Motor neuron (in vitro differentiated cells): ENCODE measurements at regions of chr1 and their contacts with region 1.

Region 1: DNA sequence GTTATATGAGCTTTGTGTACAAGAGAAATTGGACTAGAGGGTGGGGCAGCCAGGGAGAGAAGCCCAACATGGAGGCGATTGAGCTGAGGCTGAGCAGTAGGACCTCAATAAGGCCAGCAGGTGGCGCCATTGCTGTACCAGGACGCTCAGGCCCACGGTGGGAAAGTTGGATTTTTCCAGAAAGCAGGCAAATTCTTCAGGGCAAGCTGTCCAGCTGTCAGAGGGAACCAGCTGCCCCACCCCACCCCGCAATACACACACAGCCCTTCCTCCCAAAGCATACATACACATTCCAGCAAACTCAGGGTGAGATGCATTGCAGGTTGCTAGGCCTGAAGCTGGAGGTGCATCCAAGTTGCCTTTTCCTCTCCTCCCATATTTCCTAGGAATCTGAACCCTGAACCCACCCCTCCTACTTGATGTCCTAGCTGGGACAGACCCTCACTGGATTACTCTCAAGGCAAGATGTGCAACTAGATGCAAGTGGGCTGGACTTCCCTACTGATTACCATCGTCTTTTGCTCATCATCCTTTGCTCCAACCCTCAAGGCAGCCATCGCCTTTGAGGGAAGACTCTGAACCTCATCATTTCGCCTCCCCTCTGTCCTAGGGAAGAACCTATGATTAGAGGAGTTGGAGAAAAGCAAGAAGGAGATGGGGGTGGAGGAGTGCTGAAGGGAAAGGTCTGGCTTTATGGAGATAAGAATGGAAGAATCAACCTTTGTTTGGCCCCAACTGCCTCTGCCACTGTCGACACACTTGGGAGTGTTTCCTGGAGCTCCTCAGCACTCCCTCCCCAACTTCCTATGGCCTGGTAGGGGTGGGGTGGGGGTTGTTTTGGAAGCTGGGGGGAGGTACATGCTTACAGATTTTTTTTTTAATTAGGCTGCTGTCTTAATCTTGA is 25.5 kb downstream of the CD34 start:
- ATAC-seq: peak; percentile 91 to 100 (median 97)
- H3K4me3 ChIP-seq: no peak overlapping the region
- H3K27ac ChIP-seq: no peak overlapping the region
- H3K4me1 ChIP-seq: no peaks in the 10 kb centered on the region

Region 2: DNA sequence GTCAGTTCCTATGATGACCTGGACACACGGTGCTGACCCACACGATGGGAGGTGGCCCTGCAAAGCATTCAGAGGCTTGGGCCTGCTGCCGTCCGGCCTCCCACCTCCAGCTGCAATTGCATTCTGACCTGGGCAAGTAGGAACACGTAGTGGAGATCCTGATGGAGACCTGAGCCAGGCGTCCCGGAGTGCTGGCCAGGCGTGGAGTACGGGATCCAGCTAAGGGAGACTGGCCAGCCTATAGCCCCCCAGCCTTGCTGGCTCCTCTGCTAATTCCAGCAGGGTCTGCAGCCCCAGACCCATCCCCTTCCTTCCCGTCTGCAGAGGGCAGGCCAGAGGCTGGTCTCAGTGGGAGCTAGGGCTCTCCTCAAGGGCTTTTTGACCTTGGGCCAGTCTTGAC is 122.3 kb before region 1 on chr1:
- in situ Hi-C with region 1: no loop called
- ATAC-seq: peak in 5 of 8 experiments; percentile 8 to 42 (median 24)
- H3K4me3 ChIP-seq: no peak overlapping the region
- H3K27ac ChIP-seq: no peak overlapping the region
- H3K4me1 ChIP-seq: peaks cover 0 to under 1% of the 10 kb centered on the region in 2 donors

Region 3: GRCh38 chr1:207963427-207964194 is 78.2 kb after region 1 on chr1:
- in situ Hi-C with region 1: loop called in 1 of 9 experiments (anchors 10 kb)
- ATAC-seq: peak; percentile 60 to 95 (median 90)
- H3K4me3 ChIP-seq: peak overlapping the region; percentile 26 to 39 (median 34)
- H3K27ac ChIP-seq: peak overlapping the region; percentile 46 to 77
- H3K4me1 ChIP-seq: peaks cover 9 to 12% of the 10 kb centered on the region in 2 donors

Region 4: GRCh38 chr1:207973898-207974568 is 88.7 kb after region 1 on chr1:
- in situ Hi-C with region 1: loop called in 3 of 9 experiments (anchors 10 to 25 kb)
- ATAC-seq: peak in 3 of 8 experiments; percentile 34 to 98 (median 95)
- H3K4me3 ChIP-seq: no peak overlapping the region
- H3K27ac ChIP-seq: no peak overlapping the region
- H3K4me1 ChIP-seq: peaks cover 19 to 27% of the 10 kb centered on the region in 2 donors

Region 5: DNA sequence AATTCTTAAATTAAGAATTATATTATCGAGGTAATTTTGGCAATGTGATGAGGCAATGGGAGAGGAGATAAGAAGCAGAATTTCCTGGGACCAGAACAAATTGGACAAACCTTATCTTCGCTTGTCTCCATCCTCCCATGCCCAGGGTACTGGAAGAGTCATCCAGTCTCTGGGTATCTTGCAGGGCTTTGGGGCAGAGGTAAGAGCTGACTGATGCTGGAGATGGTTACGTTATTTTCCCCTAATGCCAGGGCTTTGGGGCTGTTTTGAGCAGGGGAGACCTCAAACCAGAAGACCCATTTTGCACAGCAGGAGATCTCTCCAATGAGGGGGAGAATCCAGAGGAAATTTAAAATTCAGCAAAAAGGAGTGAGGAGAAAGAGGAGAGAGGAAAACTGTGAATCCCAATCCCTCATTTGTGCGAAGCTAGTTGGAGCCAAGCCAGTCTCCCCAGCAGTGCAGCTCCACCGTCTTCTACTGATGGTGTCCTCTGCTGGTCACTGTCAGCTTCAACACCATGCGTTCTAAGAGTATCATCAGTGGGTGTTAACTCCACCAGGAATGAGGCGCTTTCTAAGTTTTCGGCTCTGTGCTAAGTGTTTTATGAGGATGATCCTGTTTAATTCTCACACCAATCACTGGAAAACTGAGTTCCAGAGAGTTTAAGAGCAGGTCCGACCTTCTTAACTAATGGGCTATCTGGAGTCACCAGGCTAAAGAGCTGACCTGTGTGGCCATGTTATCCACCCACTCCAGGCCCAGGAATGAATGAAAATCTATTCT is 112.3 kb after region 1 on chr1:
- in situ Hi-C with region 1: loop called in 1 of 9 experiments (anchors 25 kb)
- ATAC-seq: peak; percentile 75 to 98 (median 89)
- H3K4me3 ChIP-seq: no peak overlapping the region
- H3K27ac ChIP-seq: no peak overlapping the region
- H3K4me1 ChIP-seq: peaks cover 0 to 11% of the 10 kb centered on the region in 2 donors

Region 6: GRCh38 chr1:208036109-208036808 is 150.9 kb after region 1 on chr1:
- in situ Hi-C with region 1: no loop called
- ATAC-seq: peak in 4 of 8 experiments; percentile 31 to 46 (median 40)
- H3K4me3 ChIP-seq: no peak overlapping the region
- H3K27ac ChIP-seq: no peak overlapping the region
- H3K4me1 ChIP-seq: peaks cover 3 to 8% of the 10 kb centered on the region in 2 donors